ENCODE measurements at regions of chr19 and their contacts with region 1.

Region 1: GRCh38 chr19:18167975-18168645 is 5.5 kb upstream of the IFI30 start:
- DNase-seq: no peak
- ATAC-seq: peak; percentile 65
- H3K4me3 ChIP-seq: no peak overlapping the region
- H3K27ac ChIP-seq: 0 out of 2 replicates have a peak overlapping the region, but pooled peaks have one; percentile 4
- H3K4me1 ChIP-seq: peaks cover 44% of the 10 kb centered on the region
- H3K27me3 ChIP-seq: no peaks in the 10 kb centered on the region
- CTCF ChIP-seq: peak; percentile 87 to 90 (median 87)
- EP300 ChIP-seq: no peak
- POLR2A ChIP-seq: no peak
- RAD21 ChIP-seq: peak; percentile 77

Region 2: DNA sequence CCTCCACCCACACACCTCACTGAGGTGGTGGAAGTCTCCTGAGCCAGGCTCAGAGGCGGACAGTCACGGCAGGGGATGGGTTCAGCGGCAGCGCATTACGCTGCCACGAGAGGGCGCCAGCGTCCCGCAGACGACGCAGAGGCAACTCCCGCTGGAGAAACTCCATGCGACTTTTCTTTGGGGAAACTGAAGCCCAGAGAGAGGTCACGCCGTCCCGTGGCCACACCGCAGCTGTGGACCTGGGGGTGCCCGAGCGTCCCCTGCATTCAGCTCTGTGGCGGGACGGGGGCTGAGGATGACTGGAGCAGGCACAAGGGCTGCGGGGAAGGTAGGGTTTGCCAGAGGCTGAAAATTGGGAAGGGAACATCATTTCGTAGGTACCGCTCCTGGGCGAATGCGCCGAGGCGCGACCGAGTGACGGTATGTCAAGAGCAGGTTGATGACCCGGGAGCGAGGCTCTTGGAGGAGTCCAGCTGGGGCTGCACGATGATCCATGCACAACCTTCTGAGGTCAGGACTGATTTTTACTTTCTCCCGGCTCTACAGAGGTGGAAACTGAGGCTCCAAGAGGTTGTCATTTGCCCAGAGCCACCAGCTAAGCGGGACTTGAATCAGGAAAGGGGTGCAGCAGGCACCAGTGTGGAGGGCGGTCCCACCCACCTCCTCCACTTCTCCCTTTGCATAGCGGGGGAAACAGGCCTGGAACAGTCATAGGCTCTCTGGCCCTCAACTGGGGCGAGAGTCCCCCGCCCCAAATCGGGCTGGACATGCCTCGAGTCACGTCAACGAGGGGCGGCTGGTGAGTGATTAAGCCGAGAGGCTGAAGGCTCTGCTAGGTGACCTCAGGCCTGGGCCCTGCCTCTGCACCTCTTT is 160.8 kb before region 1 on chr19:
- CTCF ChIA-PET with region 1: interaction called, 3 read pairs
- POLR2A ChIA-PET with region 1: interaction called, 4 read pairs
- RAD21 ChIA-PET with region 1: interaction called, 7 read pairs
- SMC1A ChIA-PET with region 1: interaction called, 4 read pairs
- in situ Hi-C with region 1: no loop called
- intact Hi-C with region 1: loop called (anchors 2 kb)
- DNase-seq: no peak
- ATAC-seq: peak; percentile 95
- H3K4me3 ChIP-seq: peak overlapping the region; percentile 45
- H3K27ac ChIP-seq: no peak overlapping the region
- H3K4me1 ChIP-seq: peaks cover 22% of the 10 kb centered on the region
- H3K27me3 ChIP-seq: no peaks in the 10 kb centered on the region
- CTCF ChIP-seq: peak; percentile 95 to 99 (median 98); a peak in 5 of 6 replicates
- EP300 ChIP-seq: no peak
- POLR2A ChIP-seq: no peak; the same call in 1 of the 2 replicates
- RAD21 ChIP-seq: peak; percentile 89

Region 3: DNA sequence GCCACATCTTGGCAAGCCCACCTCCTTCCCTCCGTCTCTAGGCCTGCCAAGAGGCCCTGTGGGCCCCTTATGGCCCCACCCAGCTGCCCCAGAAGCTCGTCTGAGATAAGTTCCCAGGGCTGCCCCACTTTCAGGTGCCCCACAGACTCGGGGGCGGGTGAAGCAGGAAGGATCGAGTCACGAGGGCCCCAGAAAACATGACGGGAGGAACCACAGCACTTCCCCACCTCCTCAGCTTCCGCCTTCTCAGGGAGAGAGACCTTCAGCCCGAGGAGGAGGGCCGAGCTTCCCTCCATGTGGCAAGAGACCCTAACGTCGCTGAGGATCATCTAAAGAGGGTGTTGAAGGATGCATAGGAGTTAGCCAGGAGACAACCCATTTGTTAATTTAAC is 76.9 kb before region 1 on chr19:
- CTCF ChIA-PET with region 1: interaction called, 3 read pairs
- POLR2A ChIA-PET with region 1: interaction called, 10 read pairs
- RAD21 ChIA-PET with region 1: interaction called, 7 read pairs
- SMC1A ChIA-PET with region 1: interaction called, 4 read pairs
- in situ Hi-C with region 1: no loop called
- intact Hi-C with region 1: loop called (anchors 5 kb)
- DNase-seq: peak; percentile 66
- ATAC-seq: peak; percentile 70
- H3K4me3 ChIP-seq: 0 out of 2 replicates have a peak overlapping the region, but pooled peaks have one; percentile 15
- H3K27ac ChIP-seq: peak overlapping the region; percentile 93
- H3K4me1 ChIP-seq: peaks cover 34% of the 10 kb centered on the region
- H3K27me3 ChIP-seq: no peaks in the 10 kb centered on the region
- CTCF ChIP-seq: no peak
- EP300 ChIP-seq: 0 out of 4 replicates have a peak, but pooled peaks of 1 of the 2 experiments have one; percentile 29
- POLR2A ChIP-seq: peak; percentile 79
- RAD21 ChIP-seq: no peak

Region 4: GRCh38 chr19:18112989-18113478 is 55.1 kb before region 1 on chr19:
- CTCF ChIA-PET with region 1: interaction called, 10 read pairs
- POLR2A ChIA-PET with region 1: interaction called, 4 read pairs
- RAD21 ChIA-PET with region 1: interaction called, 13 read pairs
- SMC1A ChIA-PET with region 1: interaction called, 10 read pairs
- in situ Hi-C with region 1: no loop called
- intact Hi-C with region 1: loop called (anchors 1 kb)
- DNase-seq: no peak
- ATAC-seq: peak; percentile 76
- H3K4me3 ChIP-seq: no peak overlapping the region
- H3K27ac ChIP-seq: peak overlapping the region; percentile 48; the same call in 1 of the 2 replicates
- H3K4me1 ChIP-seq: peaks cover 29% of the 10 kb centered on the region
- H3K27me3 ChIP-seq: no peaks in the 10 kb centered on the region
- CTCF ChIP-seq: peak; percentile 88 to 93 (median 91)
- EP300 ChIP-seq: no peak
- POLR2A ChIP-seq: no peak
- RAD21 ChIP-seq: peak; percentile 84

Region 5: DNA sequence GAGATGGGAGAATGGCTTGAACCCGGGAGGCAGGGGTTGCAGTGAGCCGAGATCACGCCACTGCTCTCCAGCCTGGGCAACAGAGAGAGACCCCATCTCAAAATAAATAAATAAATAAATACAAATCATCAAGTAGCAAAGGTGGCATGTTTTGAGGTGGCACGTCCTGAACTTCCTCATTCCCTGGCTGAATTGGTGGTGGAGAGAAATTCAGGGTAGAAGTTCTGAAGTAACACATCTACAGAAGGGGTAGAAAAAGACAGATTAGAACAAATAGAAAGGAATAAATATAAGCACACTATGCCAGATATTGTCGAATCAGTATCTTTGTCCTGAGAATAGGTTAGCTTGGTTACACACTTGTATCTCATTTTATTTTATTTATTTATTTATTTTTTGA is 11.8 kb after region 1 on chr19:
- CTCF ChIA-PET with region 1: interaction called, 7 read pairs
- POLR2A ChIA-PET with region 1: interaction called, 12 read pairs
- RAD21 ChIA-PET with region 1: interaction called, 24 read pairs
- SMC1A ChIA-PET with region 1: interaction called, 19 read pairs
- in situ Hi-C with region 1: no loop called
- intact Hi-C with region 1: no loop called
- DNase-seq: no peak
- ATAC-seq: peak; percentile 6; the same call in 2 of the 3 replicates
- H3K4me3 ChIP-seq: no peak overlapping the region
- H3K27ac ChIP-seq: no peak overlapping the region
- H3K4me1 ChIP-seq: peaks cover 14% of the 10 kb centered on the region
- H3K27me3 ChIP-seq: no peaks in the 10 kb centered on the region
- CTCF ChIP-seq: no peak
- EP300 ChIP-seq: no peak
- POLR2A ChIP-seq: no peak
- RAD21 ChIP-seq: no peak

Region 6: GRCh38 chr19:18203863-18204393 is 35.8 kb after region 1 on chr19 and contains the start of gene RAB3A:
- CTCF ChIA-PET with region 1: interaction called, 5 read pairs
- POLR2A ChIA-PET with region 1: interaction called, 22 read pairs
- RAD21 ChIA-PET with region 1: interaction called, 6 read pairs
- SMC1A ChIA-PET with region 1: interaction called, 10 read pairs
- in situ Hi-C with region 1: no loop called
- intact Hi-C with region 1: no loop called
- DNase-seq: peak; percentile 99
- ATAC-seq: peak; percentile 97
- H3K4me3 ChIP-seq: peak within 1 kb of the TSS; percentile 86
- H3K27ac ChIP-seq: peak within 1 kb of the TSS; percentile 68
- H3K4me1 ChIP-seq: peaks cover 6% of the 10 kb centered on the region
- H3K27me3 ChIP-seq: no peaks in the 10 kb centered on the region
- CTCF ChIP-seq: no peak
- EP300 ChIP-seq: no peak
- POLR2A ChIP-seq: peak; percentile 47; the same call in 1 of the 2 replicates
- RAD21 ChIP-seq: no peak
- polyA plus RNA-seq, gene RAB3A: 0.07 TPM in 1 of 2 experiments, not detected in the other

Region 7: DNA sequence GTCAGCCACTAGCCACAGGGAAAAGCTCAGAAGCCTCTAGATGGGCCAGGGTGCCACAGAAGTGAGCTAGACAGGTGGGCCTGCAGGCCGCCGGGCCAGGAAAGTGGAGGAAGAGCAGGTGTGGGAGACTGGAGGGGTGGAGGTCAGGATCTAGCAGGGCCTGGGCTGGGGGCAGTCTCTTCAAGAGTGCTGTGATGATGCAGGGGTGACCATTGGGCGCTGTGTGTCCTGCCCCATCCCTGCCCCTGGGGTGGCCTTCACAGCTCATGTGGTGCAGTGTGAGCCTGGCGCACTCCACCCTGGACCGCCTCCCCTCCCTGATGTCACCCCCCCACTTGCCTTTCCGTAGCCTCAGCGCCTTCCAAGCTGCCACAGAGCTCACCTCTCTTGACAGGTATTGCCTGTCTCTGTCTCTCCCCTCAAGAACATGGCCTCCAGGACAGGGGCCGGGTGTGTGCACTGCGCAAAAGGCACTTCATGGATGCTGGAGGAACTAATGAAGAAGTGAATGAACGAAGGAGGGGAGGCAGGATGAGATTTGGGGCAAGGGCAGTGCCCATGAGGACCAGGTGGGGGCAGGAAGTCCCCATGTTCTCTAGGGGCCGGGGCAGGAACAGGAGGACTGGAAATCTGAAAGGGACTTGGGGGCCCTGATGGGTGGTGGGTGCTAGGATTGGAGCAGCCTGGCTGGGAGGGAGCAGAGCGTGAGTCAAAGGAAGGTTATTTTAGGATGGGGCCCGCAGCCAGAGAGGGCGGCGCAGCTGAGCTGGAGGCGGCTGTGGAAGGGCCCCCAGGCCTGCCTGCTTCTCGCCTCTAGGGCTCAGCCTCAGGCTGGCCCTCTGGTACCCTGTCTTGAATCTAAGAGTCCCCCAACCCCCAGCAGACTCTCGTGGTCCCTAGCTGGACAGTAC is 257.7 kb after region 1 on chr19:
- CTCF ChIA-PET with region 1: no interaction called
- POLR2A ChIA-PET with region 1: no interaction called
- RAD21 ChIA-PET with region 1: no interaction called
- SMC1A ChIA-PET with region 1: no interaction called
- in situ Hi-C with region 1: no loop called
- intact Hi-C with region 1: no loop called
- DNase-seq: no peak
- ATAC-seq: no peak
- H3K4me3 ChIP-seq: no peak overlapping the region
- H3K27ac ChIP-seq: no peak overlapping the region
- H3K4me1 ChIP-seq: peaks cover 41% of the 10 kb centered on the region
- H3K27me3 ChIP-seq: no peaks in the 10 kb centered on the region
- CTCF ChIP-seq: no peak
- EP300 ChIP-seq: no peak
- POLR2A ChIP-seq: 0 out of 2 replicates have a peak, but pooled peaks have one; percentile 27
- RAD21 ChIP-seq: no peak

Region 8: GRCh38 chr19:18657590-18658365 is 489.7 kb after region 1 on chr19:
- CTCF ChIA-PET with region 1: no interaction called
- POLR2A ChIA-PET with region 1: no interaction called
- RAD21 ChIA-PET with region 1: no interaction called
- SMC1A ChIA-PET with region 1: no interaction called
- in situ Hi-C with region 1: no loop called
- intact Hi-C with region 1: no loop called
- DNase-seq: no peak
- ATAC-seq: peak; percentile 82
- H3K4me3 ChIP-seq: no peak overlapping the region
- H3K27ac ChIP-seq: no peak overlapping the region
- H3K4me1 ChIP-seq: peaks cover 18% of the 10 kb centered on the region; the same call in 1 of the 2 replicates
- H3K27me3 ChIP-seq: no peaks in the 10 kb centered on the region
- CTCF ChIP-seq: no peak
- EP300 ChIP-seq: peak in 1 of 2 experiments; percentile 40; a peak in 1 of 4 replicates
- POLR2A ChIP-seq: no peak
- RAD21 ChIP-seq: no peak

Measured in GM12878 (cell line).